Activated CD4-positive, alpha-beta T cell treated with anti-CD3 and anti-CD28 coated beads, Interleukin-2, amount 10 ng/mL, durations not matched to agents 7 days and 5 days (primary cell): ENCODE measurements at regions of chr22 and their contacts with region 1.

Region 1: GRCh38 chr22:37199103-37199759 is 11.2 kb upstream of the C1QTNF6 start:
- DNase-seq: peak; percentile 100
- H3K4me3 Mint-ChIP-seq: peak overlapping the region; percentile 94
- H3K27ac Mint-ChIP-seq: peak overlapping the region; percentile 95
- H3K4me1 Mint-ChIP-seq: peaks cover 42% of the 10 kb centered on the region
- H3K27me3 Mint-ChIP-seq: no peaks in the 10 kb centered on the region

Region 2: GRCh38 chr22:37079668-37080181 is 119.5 kb before region 1 on chr22:
- CTCF ChIA-PET with region 1: interaction called, 10 read pairs
- POLR2A ChIA-PET with region 1: no interaction called
- DNase-seq: peak; percentile 92
- H3K4me3 Mint-ChIP-seq: peak overlapping the region; percentile 60
- H3K27ac Mint-ChIP-seq: peak overlapping the region; percentile 97
- H3K4me1 Mint-ChIP-seq: peaks cover 84% of the 10 kb centered on the region
- H3K27me3 Mint-ChIP-seq: no peaks in the 10 kb centered on the region

Region 3: DNA sequence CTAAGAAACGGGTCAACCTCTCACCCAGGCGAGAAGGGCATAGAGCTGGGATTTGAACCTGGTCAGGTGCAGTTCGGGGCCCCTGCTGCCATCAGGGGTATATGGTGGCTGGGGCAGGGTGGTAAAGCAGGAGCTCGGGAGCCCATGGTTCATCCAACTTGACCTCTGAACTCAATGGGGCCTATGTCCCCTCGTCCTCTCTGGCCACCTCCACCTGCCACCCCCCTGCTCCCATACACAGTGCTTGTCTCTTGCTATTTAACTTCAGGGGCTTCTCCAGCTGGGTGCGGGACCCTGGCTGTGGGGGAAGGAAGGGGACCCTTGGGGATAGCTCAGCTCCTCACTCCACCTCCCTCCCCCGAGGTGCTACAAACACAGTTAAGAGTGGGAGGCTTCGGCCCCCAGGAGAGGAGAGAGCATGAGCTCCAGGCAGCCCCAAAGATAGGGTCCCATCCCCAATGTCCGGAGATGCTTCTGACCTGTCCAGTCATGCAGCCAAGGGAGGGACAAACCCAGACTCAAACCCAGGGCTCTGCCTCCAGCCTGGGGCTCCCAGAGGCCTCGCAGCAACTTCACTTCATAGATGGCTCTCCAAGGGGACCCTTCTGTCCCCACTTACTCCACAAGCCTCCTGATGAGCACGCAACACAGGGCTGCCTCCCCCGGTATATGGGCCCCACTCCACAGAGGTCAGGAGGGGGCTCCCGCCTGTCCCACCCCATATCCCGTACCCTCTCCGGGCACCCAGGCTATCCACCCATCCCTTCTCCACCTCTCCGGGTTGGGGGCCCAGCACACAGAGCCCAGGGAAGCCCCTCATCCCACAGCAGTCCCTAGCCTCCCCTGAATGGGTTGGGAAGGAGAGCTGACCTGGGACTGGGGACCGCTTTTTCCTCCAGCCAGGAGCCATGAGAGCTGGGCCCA is 50.2 kb before region 1 on chr22:
- CTCF ChIA-PET with region 1: interaction called, 13 read pairs
- POLR2A ChIA-PET with region 1: interaction called, 6 read pairs
- DNase-seq: no peak
- H3K4me3 Mint-ChIP-seq: peak overlapping the region; percentile 87
- H3K27ac Mint-ChIP-seq: peak overlapping the region; percentile 91
- H3K4me1 Mint-ChIP-seq: peaks cover 60% of the 10 kb centered on the region
- H3K27me3 Mint-ChIP-seq: no peaks in the 10 kb centered on the region

Region 4: GRCh38 chr22:37166675-37167066 is 32.6 kb before region 1 on chr22:
- CTCF ChIA-PET with region 1: interaction called, 31 read pairs
- POLR2A ChIA-PET with region 1: interaction called, 3 read pairs
- DNase-seq: peak; percentile 84
- H3K4me3 Mint-ChIP-seq: peak overlapping the region; percentile 31
- H3K27ac Mint-ChIP-seq: peak overlapping the region; percentile 84
- H3K4me1 Mint-ChIP-seq: peaks cover 91% of the 10 kb centered on the region
- H3K27me3 Mint-ChIP-seq: no peaks in the 10 kb centered on the region

Region 5: GRCh38 chr22:37212167-37212906 is 13.1 kb after region 1 on chr22 and contains the start of gene SSTR3:
- CTCF ChIA-PET with region 1: interaction called, 52 read pairs
- POLR2A ChIA-PET with region 1: no interaction called
- DNase-seq: no peak
- H3K4me3 Mint-ChIP-seq: no peak within 1 kb of the TSS
- H3K27ac Mint-ChIP-seq: no peak within 1 kb of the TSS
- H3K4me1 Mint-ChIP-seq: peaks cover 57% of the 10 kb centered on the region
- H3K27me3 Mint-ChIP-seq: no peaks in the 10 kb centered on the region
- total RNA-seq, gene SSTR3: 10.1 to 10.2 TPM

Region 6: DNA sequence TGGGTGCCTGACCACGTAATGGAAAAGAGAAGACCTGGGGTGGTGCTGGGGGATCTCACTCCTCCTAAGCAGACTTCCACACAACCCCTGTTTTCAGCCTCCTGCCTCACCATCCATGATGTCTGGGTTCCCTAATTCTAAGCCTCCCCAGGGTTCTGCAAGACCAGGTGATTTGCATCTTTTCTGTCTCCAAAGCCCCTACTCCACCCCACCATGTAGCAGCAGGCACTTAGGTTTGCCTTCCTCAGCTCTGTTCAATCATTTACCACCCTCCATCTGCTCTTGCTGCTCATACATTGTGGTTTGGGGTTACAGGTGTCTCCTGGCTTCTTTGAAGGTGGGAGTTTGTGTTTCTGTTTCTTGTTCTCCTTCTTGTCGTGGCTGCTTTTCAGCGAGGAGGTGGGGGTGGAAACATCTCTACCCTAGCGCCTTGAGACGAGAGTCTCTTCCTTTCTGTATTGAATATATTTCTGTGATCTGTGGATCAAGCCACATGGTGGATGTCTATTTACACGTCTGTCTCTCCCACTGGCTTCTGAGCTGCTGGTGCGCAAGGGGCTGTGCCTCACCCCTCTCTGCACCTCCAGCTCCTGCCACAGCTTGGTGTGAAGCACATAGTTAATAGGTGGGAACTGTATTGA is 19.7 kb after region 1 on chr22:
- CTCF ChIA-PET with region 1: interaction called, 52 read pairs
- POLR2A ChIA-PET with region 1: no interaction called
- DNase-seq: peak; percentile 90
- H3K4me3 Mint-ChIP-seq: peak overlapping the region; percentile 75
- H3K27ac Mint-ChIP-seq: peak overlapping the region; percentile 95
- H3K4me1 Mint-ChIP-seq: peaks cover 91% of the 10 kb centered on the region
- H3K27me3 Mint-ChIP-seq: no peaks in the 10 kb centered on the region

Region 7: GRCh38 chr22:37229805-37230672 is 30.8 kb after region 1 on chr22:
- CTCF ChIA-PET with region 1: interaction called, 26 read pairs
- POLR2A ChIA-PET with region 1: no interaction called
- DNase-seq: peak; percentile 95
- H3K4me3 Mint-ChIP-seq: peak overlapping the region; percentile 76
- H3K27ac Mint-ChIP-seq: peak overlapping the region; percentile 100
- H3K4me1 Mint-ChIP-seq: peaks cover 92% of the 10 kb centered on the region
- H3K27me3 Mint-ChIP-seq: no peaks in the 10 kb centered on the region

Region 8: GRCh38 chr22:37623075-37624016 is 424.1 kb after region 1 on chr22:
- CTCF ChIA-PET with region 1: no interaction called
- POLR2A ChIA-PET with region 1: no interaction called
- DNase-seq: peak; percentile 79
- H3K4me3 Mint-ChIP-seq: no peak overlapping the region
- H3K27ac Mint-ChIP-seq: peak overlapping the region; percentile 81
- H3K4me1 Mint-ChIP-seq: peaks cover 40% of the 10 kb centered on the region
- H3K27me3 Mint-ChIP-seq: no peaks in the 10 kb centered on the region